ENCODE measurements at regions of chr7 and their contacts with region 1.

Region 1: DNA sequence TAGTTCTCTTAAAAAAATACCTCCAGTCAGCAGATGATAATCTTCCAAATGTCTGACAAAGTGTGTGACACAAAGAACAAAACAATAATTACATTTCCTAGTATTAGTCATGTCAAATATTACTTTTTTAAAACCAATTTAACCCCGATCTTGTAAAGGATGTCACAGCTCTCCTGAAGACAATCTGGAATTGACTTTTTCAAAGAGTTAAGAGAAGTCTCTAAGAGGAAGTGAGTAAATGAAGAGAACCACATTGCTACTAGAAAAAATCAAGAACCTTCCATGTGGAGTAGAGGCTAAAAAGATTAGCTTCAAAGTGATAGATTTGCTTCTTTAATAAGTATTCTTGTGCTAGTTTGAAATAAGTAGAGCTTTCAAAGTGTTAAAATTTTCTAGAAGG is 218.2 kb upstream of the IMMP2L start:
- DNase-seq: no peak
- H3K4me3 ChIP-seq: no peak overlapping the region
- H3K27ac ChIP-seq: no peak overlapping the region
- H3K4me1 ChIP-seq: no peaks in the 10 kb centered on the region
- H3K27me3 ChIP-seq: no peaks in the 10 kb centered on the region
- CTCF ChIP-seq: no peak
- POLR2A ChIP-seq: no peak

Region 2: GRCh38 chr7:112510001-112510742 is 729.6 kb after region 1 on chr7:
- intact Hi-C with region 1: loop called (anchors 5 kb)
- DNase-seq: no peak
- H3K4me3 ChIP-seq: no peak overlapping the region
- H3K27ac ChIP-seq: peak overlapping the region in 1 of 2 donors; percentile 25
- H3K4me1 ChIP-seq: no peaks in the 10 kb centered on the region
- H3K27me3 ChIP-seq: no peaks in the 10 kb centered on the region
- CTCF ChIP-seq: no peak
- POLR2A ChIP-seq: no peak